Calu3 (cell line): ENCODE measurements at regions of chr5 and their contacts with region 1.

Region 1: DNA sequence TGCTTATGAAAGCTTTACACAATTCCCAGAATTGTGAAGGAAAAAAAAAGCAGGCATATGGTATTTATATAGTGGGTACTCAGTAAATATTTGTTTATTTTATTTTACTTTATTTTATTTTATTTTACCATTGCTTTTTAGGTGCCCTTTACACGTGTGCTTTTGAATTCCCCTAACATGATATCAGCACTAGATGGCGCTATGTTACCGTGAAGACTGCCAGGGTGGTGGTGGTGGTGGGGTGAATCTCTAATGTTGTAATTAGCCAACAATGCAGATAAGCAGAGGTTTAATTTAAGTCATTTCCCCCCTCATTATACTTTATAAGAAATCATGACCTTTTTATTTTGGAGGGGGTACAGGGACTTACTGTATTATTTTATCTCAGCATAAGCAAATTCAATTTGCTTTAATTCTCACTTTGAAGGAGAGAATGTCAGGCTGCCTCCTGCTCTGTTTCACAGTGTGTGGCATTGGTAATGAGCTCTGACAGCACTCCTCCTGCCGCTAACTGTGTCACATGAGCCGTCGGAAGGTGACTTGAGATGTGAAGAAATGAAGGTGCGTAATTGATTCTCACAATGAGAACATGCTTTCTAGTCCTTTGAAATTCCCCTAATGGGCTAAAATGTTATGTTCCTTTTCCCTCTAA is 165.6 kb downstream of the YTHDC2 start:
- DNase-seq: peak; percentile 61
- H3K4me3 Mint-ChIP-seq: no peak overlapping the region
- H3K27ac Mint-ChIP-seq: no peak overlapping the region
- H3K4me1 Mint-ChIP-seq: no peaks in the 10 kb centered on the region
- H3K27me3 Mint-ChIP-seq: peaks cover 27% of the 10 kb centered on the region
- CTCF ChIP-seq: peak; percentile 78

Region 2: GRCh38 chr5:113574417-113574816 is 104.6 kb before region 1 on chr5:
- CTCF ChIA-PET with region 1: no interaction called
- intact Hi-C with region 1: no loop called
- DNase-seq: peak; percentile 33
- H3K4me3 Mint-ChIP-seq: no peak overlapping the region
- H3K27ac Mint-ChIP-seq: no peak overlapping the region
- H3K4me1 Mint-ChIP-seq: no peaks in the 10 kb centered on the region
- H3K27me3 Mint-ChIP-seq: no peaks in the 10 kb centered on the region
- CTCF ChIP-seq: no peak

Region 3: DNA sequence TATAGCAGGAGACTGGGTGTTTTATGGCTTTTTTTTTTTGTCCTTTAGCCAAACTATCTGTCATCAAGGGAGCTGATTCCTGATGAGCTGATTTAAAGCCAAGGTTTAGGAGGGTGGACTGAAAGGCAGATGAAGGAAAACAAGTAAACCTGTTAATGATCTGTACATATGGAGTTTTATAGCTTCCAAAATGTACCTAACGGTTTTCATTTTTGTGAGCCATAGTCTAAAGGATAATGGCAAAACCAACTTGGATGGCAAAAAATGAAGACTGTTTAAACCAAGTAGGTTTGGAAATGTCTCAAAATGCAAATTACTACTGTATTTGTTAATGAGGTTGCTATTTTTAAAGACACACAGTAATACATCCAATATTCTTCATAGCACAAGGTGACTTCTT is 115.9 kb after region 1 on chr5:
- CTCF ChIA-PET with region 1: no interaction called
- intact Hi-C with region 1: no loop called
- DNase-seq: no peak
- H3K4me3 Mint-ChIP-seq: no peak overlapping the region
- H3K27ac Mint-ChIP-seq: no peak overlapping the region
- H3K4me1 Mint-ChIP-seq: no peaks in the 10 kb centered on the region
- H3K27me3 Mint-ChIP-seq: peaks cover 44% of the 10 kb centered on the region
- CTCF ChIP-seq: no peak

Region 4: DNA sequence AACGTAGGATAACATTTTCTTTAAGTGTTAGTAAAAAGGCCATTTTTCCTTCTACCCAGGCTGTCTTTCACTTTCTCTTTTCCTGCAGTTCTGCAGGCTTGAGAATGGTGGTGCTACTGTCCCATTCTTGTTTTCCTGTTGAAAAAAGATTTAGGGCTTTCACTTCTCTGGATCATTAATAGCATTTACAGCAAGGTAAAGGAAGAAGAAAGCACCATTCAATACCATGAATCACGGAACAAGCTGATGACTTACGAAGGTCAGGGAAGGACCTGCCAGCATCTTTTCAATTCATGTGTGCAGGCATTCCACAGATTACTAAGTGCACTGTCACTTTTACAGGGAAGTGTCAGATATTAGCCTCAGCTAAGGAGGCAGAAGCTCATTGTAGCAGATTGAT is 127.2 kb after region 1 on chr5:
- CTCF ChIA-PET with region 1: interaction called, 3 read pairs
- intact Hi-C with region 1: loop called (anchors 5 kb)
- DNase-seq: peak; percentile 22
- H3K4me3 Mint-ChIP-seq: peak overlapping the region; percentile 25
- H3K27ac Mint-ChIP-seq: no peak overlapping the region
- H3K4me1 Mint-ChIP-seq: peaks cover 17% of the 10 kb centered on the region
- H3K27me3 Mint-ChIP-seq: no peaks in the 10 kb centered on the region
- CTCF ChIP-seq: peak; percentile 33

Region 5: GRCh38 chr5:114305402-114306211 is 626.6 kb after region 1 on chr5:
- CTCF ChIA-PET with region 1: no interaction called
- intact Hi-C with region 1: loop called (anchors 1 kb)
- DNase-seq: peak; percentile 17
- H3K4me3 Mint-ChIP-seq: no peak overlapping the region
- H3K27ac Mint-ChIP-seq: no peak overlapping the region
- H3K4me1 Mint-ChIP-seq: no peaks in the 10 kb centered on the region
- H3K27me3 Mint-ChIP-seq: peaks cover 14% of the 10 kb centered on the region
- CTCF ChIP-seq: peak; percentile 38

Region 6: GRCh38 chr5:114361724-114362196 is 682.7 kb after region 1 on chr5 and contains the start of gene KCNN2:
- CTCF ChIA-PET with region 1: interaction called, 3 read pairs
- intact Hi-C with region 1: loop called (anchors 2 kb)
- DNase-seq: peak; percentile 86
- H3K4me3 Mint-ChIP-seq: peak within 1 kb of the TSS; percentile 99
- H3K27ac Mint-ChIP-seq: peak within 1 kb of the TSS; percentile 87
- H3K4me1 Mint-ChIP-seq: no peaks in the 10 kb centered on the region
- H3K27me3 Mint-ChIP-seq: peaks cover 35% of the 10 kb centered on the region
- CTCF ChIP-seq: no peak
- total RNA-seq, gene KCNN2: 1.2 and 2.0 TPM in 2 replicates

Region 7: GRCh38 chr5:114789773-114790402 is 1110.8 kb after region 1 on chr5:
- CTCF ChIA-PET with region 1: no interaction called
- intact Hi-C with region 1: loop called (anchors 5 kb)
- DNase-seq: no peak
- H3K4me3 Mint-ChIP-seq: no peak overlapping the region
- H3K27ac Mint-ChIP-seq: no peak overlapping the region
- H3K4me1 Mint-ChIP-seq: no peaks in the 10 kb centered on the region
- H3K27me3 Mint-ChIP-seq: no peaks in the 10 kb centered on the region
- CTCF ChIP-seq: peak; percentile 19

Region 8: DNA sequence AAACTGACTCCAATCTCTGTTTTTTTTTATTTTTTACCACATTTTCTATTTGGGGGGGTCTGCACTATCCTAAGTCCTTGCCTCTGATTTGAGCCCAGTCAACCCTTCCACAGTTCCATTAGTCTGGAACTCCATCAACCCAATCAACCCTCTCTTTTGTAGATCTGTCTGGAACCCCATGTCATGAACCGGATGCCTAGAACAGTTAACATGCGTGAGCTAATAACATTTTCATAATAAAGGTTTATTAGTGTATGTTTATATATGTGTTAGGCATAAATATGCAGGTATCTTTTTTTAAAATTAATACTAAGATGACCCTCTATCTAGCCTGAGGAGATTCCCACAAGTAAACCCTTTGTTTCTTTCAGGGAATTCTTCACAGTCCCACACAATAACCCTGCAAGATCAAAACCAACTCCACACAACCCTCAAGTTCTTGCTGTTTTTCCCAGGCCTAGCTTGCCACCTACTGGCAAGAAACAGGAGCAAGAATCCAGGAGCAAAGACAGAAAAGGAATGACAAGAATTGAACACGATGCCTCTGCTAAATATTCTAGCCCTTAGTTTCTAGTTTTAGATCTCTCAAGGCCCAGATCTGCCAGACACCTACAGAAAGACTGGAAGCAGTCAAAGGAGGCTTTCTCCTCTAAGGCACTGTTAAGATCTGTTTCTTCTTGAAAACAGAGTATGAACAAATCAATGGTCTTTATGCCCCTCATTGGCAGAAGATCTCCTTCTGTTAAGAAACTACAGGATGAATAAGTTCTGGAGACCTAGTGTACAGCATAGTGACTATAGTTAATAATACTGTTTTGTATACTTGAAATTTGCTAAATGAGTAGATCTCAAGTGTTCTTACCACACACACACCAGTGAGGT is 1390.3 kb after region 1 on chr5:
- CTCF ChIA-PET with region 1: no interaction called
- intact Hi-C with region 1: loop called (anchors 1 kb)
- DNase-seq: peak; percentile 51
- H3K4me3 Mint-ChIP-seq: no peak overlapping the region
- H3K27ac Mint-ChIP-seq: no peak overlapping the region
- H3K4me1 Mint-ChIP-seq: peaks cover 7% of the 10 kb centered on the region
- H3K27me3 Mint-ChIP-seq: no peaks in the 10 kb centered on the region
- CTCF ChIP-seq: no peak